HCT116 (cell line): ENCODE measurements at regions of chr1 and their contacts with region 1.

Region 1: GRCh38 chr1:175146529-175147213 is 45.9 kb downstream of the KIAA0040 start:
- DNase-seq: peak; percentile 63
- ATAC-seq: peak; percentile 100
- H3K4me3 ChIP-seq: no peak overlapping the region
- H3K27ac ChIP-seq: no peak overlapping the region
- H3K4me1 ChIP-seq: peaks cover 0 to 9% of the 10 kb centered on the region in 2 experiments; a peak in 2 of 4 replicates
- H3K27me3 ChIP-seq: peaks cover 9% of the 10 kb centered on the region
- CTCF ChIP-seq: peak; percentile 68 to 92 (median 79)
- POLR2A ChIP-seq: no peak
- RAD21 ChIP-seq: peak; percentile 69

Region 2: DNA sequence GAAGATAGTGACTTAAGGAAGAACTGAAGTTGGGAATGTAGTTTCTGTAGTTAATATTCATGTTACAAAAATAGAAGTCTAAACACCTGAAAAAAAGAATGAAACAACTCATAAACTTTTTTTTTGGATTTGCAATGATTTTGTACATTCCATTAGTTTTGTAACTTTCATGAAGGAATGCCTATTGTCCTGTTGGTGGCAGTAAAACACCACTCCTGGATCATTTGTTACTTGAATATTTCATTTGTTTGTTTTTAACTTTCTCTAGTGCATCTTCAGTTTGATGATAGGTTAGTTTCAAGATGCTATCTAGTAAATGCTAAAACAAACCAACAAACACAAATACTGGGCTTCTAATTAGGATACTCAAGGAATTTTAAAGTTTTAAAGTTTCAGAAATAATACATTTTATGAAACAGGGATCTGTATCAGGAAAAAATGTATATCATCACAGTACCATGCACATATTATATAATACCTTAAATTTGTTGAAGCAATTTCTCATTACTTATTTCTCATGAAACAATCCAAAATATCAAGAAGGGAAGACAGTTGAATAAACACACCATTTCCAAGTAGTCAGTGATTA is 376.6 kb before region 1 on chr1:
- CTCF ChIA-PET with region 1: no interaction called
- POLR2A ChIA-PET with region 1: no interaction called
- RAD21 ChIA-PET with region 1: no interaction called
- intact Hi-C with region 1: loop called (anchors 2 kb)
- DNase-seq: peak; percentile 37
- ATAC-seq: no peak
- H3K4me3 ChIP-seq: no peak overlapping the region
- H3K27ac ChIP-seq: no peak overlapping the region
- H3K4me1 ChIP-seq: no peaks in the 10 kb centered on the region
- H3K27me3 ChIP-seq: no peaks in the 10 kb centered on the region
- CTCF ChIP-seq: peak; percentile 62 to 84 (median 82); a peak in 5 of 6 replicates
- POLR2A ChIP-seq: no peak
- RAD21 ChIP-seq: peak; percentile 87

Region 3: GRCh38 chr1:175023043-175023921 is 123.4 kb before region 1 on chr1 and contains the start of gene MRPS14:
- CTCF ChIA-PET with region 1: interaction called, 35 read pairs
- POLR2A ChIA-PET with region 1: no interaction called
- RAD21 ChIA-PET with region 1: interaction called in 1 of 2 experiments, 3 read pairs
- intact Hi-C with region 1: loop called (anchors 2 kb)
- DNase-seq: peak; percentile 98
- ATAC-seq: peak; percentile 96
- H3K4me3 ChIP-seq: peak within 1 kb of the TSS; percentile 90 to 97
- H3K27ac ChIP-seq: peak within 1 kb of the TSS; percentile 67
- H3K4me1 ChIP-seq: peaks cover 0 to 13% of the 10 kb centered on the region in 2 experiments; a peak in 2 of 4 replicates
- H3K27me3 ChIP-seq: no peaks in the 10 kb centered on the region
- CTCF ChIP-seq: no peak
- POLR2A ChIP-seq: peak; percentile 86
- RAD21 ChIP-seq: no peak
- total RNA-seq, gene MRPS14: 29.4 TPM

Region 4: DNA sequence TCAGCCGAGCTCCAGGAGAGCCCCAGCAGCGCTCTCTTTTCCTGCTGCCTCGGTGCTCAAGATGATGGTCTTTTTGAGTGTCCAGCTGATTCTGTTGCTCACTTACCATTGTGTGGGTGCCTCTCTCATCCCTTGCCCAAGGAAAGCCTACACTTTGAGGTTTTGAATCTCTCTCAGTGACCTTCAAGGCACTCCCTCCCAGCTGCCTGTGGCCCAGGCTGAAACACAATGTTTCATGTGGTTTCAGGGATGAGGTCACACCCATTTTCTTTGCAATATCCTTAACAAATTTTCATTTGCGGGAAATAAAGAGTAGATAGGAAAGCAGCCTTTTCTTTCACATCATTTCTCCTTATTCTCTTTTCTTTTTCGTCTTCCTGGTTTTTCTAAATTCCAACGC is 110.8 kb before region 1 on chr1:
- CTCF ChIA-PET with region 1: interaction called, 8 read pairs
- POLR2A ChIA-PET with region 1: no interaction called
- RAD21 ChIA-PET with region 1: no interaction called
- intact Hi-C with region 1: loop called (anchors 1 kb)
- DNase-seq: no peak
- ATAC-seq: no peak
- H3K4me3 ChIP-seq: no peak overlapping the region
- H3K27ac ChIP-seq: no peak overlapping the region
- H3K4me1 ChIP-seq: no peaks in the 10 kb centered on the region
- H3K27me3 ChIP-seq: no peaks in the 10 kb centered on the region
- CTCF ChIP-seq: no peak
- POLR2A ChIP-seq: no peak
- RAD21 ChIP-seq: no peak

Region 5: GRCh38 chr1:175124861-175125260 is 21.8 kb before region 1 on chr1:
- CTCF ChIA-PET with region 1: interaction called, 30 read pairs
- POLR2A ChIA-PET with region 1: no interaction called
- RAD21 ChIA-PET with region 1: interaction called in 1 of 2 experiments, 9 read pairs
- intact Hi-C with region 1: no loop called
- DNase-seq: no peak
- ATAC-seq: no peak
- H3K4me3 ChIP-seq: no peak overlapping the region
- H3K27ac ChIP-seq: no peak overlapping the region
- H3K4me1 ChIP-seq: no peaks in the 10 kb centered on the region
- H3K27me3 ChIP-seq: no peaks in the 10 kb centered on the region
- CTCF ChIP-seq: no peak
- POLR2A ChIP-seq: no peak
- RAD21 ChIP-seq: no peak

Region 6: GRCh38 chr1:175319418-175320230 is 173.0 kb after region 1 on chr1:
- CTCF ChIA-PET with region 1: interaction called, 77 read pairs
- POLR2A ChIA-PET with region 1: interaction called, 3 read pairs
- RAD21 ChIA-PET with region 1: interaction called, 5 to 7 read pairs
- intact Hi-C with region 1: no loop called
- DNase-seq: peak; percentile 66
- ATAC-seq: peak; percentile 96
- H3K4me3 ChIP-seq: no peak overlapping the region
- H3K27ac ChIP-seq: no peak overlapping the region
- H3K4me1 ChIP-seq: peaks cover 0 to 12% of the 10 kb centered on the region in 2 experiments; a peak in 2 of 4 replicates
- H3K27me3 ChIP-seq: no peaks in the 10 kb centered on the region
- CTCF ChIP-seq: peak; percentile 86 to 90 (median 87)
- POLR2A ChIP-seq: no peak
- RAD21 ChIP-seq: peak; percentile 97

Region 7: GRCh38 chr1:176843352-176844297 is 1697.0 kb after region 1 on chr1:
- CTCF ChIA-PET with region 1: interaction called, 3 read pairs
- POLR2A ChIA-PET with region 1: no interaction called
- RAD21 ChIA-PET with region 1: no interaction called
- intact Hi-C with region 1: loop called (anchors 5 kb)
- DNase-seq: peak; percentile 7
- ATAC-seq: no peak
- H3K4me3 ChIP-seq: no peak overlapping the region
- H3K27ac ChIP-seq: no peak overlapping the region
- H3K4me1 ChIP-seq: no peaks in the 10 kb centered on the region
- H3K27me3 ChIP-seq: peaks cover 9% of the 10 kb centered on the region
- CTCF ChIP-seq: peak in 2 of 3 experiments; percentile 8 to 47; a peak in 3 of 6 replicates
- POLR2A ChIP-seq: no peak
- RAD21 ChIP-seq: peak; percentile 61